Head of caudate nucleus (tissue), 42 donors: ENCODE measurements at regions of chr6 and their contacts with region 1.

Region 1: GRCh38 chr6:170286246-170286933 is 4.5 kb downstream of the DLL1 start:
- DNase-seq: peak; percentile 63 to 92 (median 82)

Region 2: DNA sequence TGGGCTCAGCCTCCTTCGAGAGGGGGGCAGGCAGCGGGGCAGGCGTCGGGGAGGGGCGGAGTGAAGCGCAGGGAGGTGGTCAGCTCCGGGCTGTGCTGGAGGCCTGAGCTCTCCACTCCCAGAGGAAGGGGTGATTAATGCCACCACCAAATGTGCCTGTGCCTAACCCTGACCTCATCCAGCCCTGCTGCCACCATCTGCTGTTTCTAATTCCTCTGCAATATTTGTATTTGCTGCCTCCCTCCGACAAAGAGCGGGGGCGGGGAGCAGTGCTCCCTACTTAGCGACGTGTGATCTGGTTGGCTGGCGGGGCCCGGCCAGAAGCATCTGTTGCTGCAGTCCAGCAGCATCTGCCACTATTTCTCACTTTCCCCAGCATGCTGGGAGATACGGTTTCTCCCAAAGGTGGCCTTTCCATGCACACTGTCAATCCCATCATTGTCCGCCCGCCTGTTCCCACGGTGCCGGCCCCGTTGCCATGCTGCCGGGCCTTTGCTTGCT is 42.5 kb before region 1 on chr6:
- intact Hi-C with region 1: loop called (anchors 5 kb)
- DNase-seq: peak in 41 of 42 donors; percentile 32 to 84 (median 65)